Cardiac septum (tissue), 1 donor: ENCODE measurements at regions of chr19 and their contacts with region 1.

Region 1: GRCh38 chr19:11293433-11294389 is 2.2 kb upstream of the TSPAN16 start:
- DNase-seq: peak; percentile 99

Region 2: DNA sequence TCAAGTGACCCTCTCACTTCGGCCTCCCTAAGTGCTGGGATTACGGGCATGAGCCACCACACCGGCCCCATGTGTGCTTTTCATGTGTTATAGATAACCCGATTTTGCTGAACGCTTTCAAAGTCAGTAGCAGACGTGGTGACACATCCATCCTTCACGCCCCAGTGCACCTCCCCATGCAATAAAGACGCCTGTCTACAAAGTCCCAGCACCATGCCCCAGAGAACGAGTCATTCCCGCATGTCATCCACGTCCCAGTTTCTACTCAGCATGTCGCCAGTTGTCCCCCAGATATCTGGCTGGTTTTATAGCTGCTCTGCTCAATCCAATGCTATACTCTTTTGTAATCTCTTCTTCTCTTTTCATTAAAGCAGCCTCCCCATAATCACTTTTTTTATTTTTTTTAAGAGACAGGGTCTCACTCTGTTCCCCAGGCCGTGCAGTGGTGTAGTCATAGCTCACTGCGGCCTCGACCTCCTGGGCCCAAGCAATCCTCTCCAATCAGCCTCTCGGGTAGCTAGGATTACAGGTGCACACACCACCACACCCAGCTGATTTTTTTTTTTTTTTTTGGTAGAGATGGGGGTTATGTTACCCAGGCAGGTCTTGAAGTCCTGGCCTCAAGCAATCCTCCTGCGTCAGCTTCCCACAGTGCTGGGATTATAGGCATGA is 533.3 kb before region 1 on chr19:
- intact Hi-C with region 1: no loop called
- DNase-seq: no peak

Region 3: DNA sequence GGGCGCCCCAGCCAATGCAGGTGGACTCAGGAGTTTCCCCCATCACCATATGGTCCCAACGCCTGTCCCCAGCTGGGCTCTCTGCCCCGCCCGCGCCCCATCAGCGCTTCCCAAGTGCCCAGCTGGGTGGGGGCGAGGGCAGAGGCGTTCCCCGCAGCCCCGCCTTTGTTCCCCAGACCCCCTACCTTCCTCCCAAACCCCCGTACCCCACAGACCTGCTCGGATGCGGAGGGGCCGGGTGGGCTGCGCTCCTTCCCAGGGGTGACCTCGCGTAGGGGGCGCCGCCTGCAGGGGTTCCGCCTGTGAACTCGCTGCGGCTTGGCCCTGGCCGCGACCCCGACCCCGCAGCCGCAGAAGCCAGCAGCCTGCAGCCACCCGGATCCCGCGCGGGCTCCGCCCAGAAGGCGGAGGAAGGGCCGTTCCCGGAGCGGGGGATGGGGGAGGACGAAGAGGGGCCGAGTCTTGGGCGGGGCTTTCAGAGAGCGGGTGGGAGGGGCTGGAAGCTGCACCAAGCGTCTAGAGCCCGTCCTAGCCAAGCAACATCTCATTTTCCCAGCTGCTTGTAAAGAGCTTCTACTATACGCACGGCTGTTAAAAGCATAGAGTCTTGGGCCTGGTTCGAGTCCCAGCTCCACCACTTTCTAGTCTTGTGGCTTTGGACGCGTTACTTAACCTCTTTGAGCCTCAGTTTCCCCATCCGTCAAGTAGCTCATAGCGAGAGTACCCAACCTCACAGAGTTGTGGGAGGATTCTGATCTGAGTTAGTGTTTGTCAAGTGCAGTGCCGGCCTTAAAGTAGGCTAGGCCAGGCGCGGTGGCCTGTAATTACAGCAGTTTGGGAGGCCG is 45.8 kb after region 1 on chr19 and contains the start of gene RAB3D:
- intact Hi-C with region 1: loop called (anchors 2 kb)
- DNase-seq: peak; percentile 98
- total RNA-seq, gene RAB3D: 7.4 TPM

Region 4: GRCh38 chr19:11446652-11447301 is 153.1 kb after region 1 on chr19:
- intact Hi-C with region 1: loop called (anchors 5 kb)
- DNase-seq: no peak

Region 5: DNA sequence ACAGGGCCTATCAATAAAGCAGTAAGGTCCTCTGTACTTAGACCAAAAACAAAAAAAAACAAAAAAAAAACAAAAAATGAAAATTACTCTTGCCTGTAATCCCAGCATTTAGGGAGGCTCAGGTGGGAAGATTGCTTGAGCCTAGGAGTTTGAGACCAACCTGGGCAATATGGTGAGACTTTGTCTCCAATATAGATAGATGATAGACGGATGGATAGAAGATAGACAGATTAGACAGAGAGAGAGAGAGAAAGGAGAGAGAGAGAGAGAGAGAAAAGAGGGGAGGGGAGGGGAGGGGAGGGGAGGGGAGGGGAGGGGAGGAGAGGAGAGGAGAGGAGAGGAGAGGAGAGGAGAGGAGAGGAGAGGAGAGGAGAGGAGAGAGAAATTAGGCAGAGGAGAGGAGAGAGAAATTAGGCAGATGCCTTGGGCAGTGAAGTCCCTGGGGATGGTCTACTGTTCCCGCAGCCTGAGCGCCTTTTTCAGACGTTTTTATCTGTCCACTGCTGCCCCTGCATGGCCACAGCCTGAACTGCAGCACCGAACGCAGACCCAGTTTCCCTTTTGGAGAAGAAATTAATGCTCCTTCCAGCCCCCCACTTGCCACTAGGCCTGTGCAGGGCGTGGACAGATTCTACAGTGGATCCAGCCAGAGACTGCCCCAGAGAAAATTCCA is 293.7 kb after region 1 on chr19:
- intact Hi-C with region 1: loop called (anchors 10 kb)
- DNase-seq: peak; percentile 87